ENCODE measurements at regions of chr7 and their contacts with region 1.

Region 1: GRCh38 chr7:141624763-141625162 is 73.6 kb downstream of the AGK start:
- DNase-seq: no peak
- H3K4me3 ChIP-seq: no peak overlapping the region
- H3K27ac ChIP-seq: no peak overlapping the region
- H3K4me1 ChIP-seq: no peaks in the 10 kb centered on the region
- H3K27me3 ChIP-seq: no peaks in the 10 kb centered on the region
- CTCF ChIP-seq: no peak
- POLR2A ChIP-seq: no peak

Region 2: DNA sequence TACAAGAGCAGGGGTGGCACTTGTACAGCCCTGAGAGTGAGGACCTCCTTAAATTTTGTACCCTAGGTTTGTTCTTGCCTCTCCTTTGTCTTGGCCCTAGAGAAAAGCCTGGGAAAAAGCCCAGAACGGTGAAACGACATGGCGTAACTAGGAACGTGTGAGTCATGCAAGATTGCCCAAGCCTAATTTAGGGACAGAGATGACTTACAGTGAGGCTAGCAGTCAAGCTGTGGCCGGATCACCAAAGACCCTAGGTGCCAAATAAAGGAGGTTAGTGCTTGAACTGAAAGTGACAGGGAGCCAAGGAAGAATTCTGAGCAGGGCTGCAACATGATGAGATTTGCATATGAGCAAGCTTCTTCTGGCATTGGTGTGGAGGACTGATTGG is 1770.6 kb before region 1 on chr7:
- intact Hi-C with region 1: loop called (anchors 5 kb)
- DNase-seq: peak in 1 of 2 donors; percentile 88
- H3K4me3 ChIP-seq: no peak overlapping the region
- H3K27ac ChIP-seq: no peak overlapping the region
- H3K4me1 ChIP-seq: peaks cover 14% of the 10 kb centered on the region
- H3K27me3 ChIP-seq: no peaks in the 10 kb centered on the region
- CTCF ChIP-seq: no peak
- POLR2A ChIP-seq: no peak

Region 3: GRCh38 chr7:141663081-141663849 is 38.5 kb after region 1 on chr7:
- intact Hi-C with region 1: no loop called
- DNase-seq: no peak
- H3K4me3 ChIP-seq: no peak overlapping the region
- H3K27ac ChIP-seq: no peak overlapping the region
- H3K4me1 ChIP-seq: peaks cover 13% of the 10 kb centered on the region
- H3K27me3 ChIP-seq: no peaks in the 10 kb centered on the region
- CTCF ChIP-seq: no peak
- POLR2A ChIP-seq: no peak